ENCODE measurements at regions of chr16 and their contacts with region 1.

Region 1: DNA sequence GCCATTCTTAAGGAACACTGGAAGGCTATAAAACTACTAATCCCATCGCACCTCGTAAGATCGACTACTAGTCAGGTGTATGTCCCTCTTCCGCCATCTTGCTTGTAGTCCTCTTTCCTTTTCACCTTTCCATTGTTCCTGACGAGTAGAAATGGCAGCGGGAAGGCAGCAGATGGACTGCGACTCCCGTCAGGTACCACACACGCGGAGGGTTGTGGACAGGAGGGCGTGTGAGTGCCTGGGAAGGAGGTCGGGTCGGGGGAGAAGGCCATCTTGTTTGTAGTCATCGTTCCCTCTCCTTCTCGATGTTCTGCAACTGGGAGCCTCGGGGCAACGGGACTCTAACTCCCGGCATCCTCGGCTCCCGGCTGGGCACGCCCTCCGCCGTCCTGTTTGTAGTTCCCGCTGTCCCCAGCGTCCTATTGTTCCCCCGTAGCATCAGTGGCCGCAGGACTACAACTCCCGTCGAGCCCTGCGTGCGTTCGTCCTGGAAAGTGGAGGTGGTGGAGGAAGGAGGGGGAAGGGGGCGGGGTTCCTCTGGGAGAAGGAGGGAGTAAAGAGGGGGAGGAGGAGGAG is 324 bp upstream of the FBXL19 start:
- DNase-seq: peak; percentile 99
- ATAC-seq: peak; percentile 79
- H3K4me3 ChIP-seq: peak overlapping the region; percentile 59
- H3K27ac ChIP-seq: peak overlapping the region; percentile 94
- H3K4me1 ChIP-seq: peaks cover 2% of the 10 kb centered on the region; the same call in 1 of the 2 replicates
- H3K27me3 ChIP-seq: no peaks in the 10 kb centered on the region
- CTCF ChIP-seq: no peak
- POLR2A ChIP-seq: peak; percentile 78
- RAD21 ChIP-seq: no peak

Region 2: DNA sequence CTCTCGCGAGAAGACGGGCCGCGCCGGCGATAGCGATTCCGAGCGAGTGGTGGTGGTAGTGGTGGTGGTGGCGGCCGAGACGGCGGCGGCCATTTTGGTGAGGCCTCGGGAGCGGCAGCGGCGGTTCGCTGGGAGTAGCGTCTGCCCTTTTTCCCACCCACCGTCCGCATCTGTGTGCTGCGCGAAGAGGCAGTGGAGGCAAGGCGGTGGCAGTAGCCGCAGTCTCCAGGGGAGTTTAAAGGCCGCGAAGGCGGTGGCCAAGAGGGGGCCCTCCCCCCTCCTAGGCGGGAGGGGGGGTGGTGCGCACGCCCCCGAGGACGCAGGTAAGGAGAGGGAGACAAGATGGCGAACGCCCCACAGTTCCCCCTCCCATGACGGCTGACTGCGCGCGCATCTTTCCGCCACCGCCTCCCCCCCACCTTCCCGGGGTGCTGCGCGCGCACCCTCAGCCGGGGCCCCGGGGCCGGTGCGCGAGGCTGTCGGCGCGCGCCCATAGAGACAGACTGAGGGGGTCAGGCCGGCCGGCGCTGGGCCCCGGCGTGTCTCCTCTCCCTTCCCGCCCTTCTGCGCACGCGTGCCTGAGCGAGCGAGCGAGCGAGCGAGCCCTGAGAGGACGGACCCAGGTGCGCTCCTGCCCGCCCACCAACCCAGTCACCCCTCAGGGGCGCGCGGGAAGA is 224.8 kb before region 1 on chr16:
- CTCF ChIA-PET with region 1: no interaction called
- POLR2A ChIA-PET with region 1: no interaction called
- dilution Hi-C with region 1: no loop called
- in situ Hi-C with region 1: no loop called
- intact Hi-C with region 1: loop called (anchors 5 kb)
- DNase-seq: peak; percentile 87
- ATAC-seq: peak; percentile 83
- H3K4me3 ChIP-seq: peak overlapping the region; percentile 85
- H3K27ac ChIP-seq: peak overlapping the region; percentile 99
- H3K4me1 ChIP-seq: peaks cover 8% of the 10 kb centered on the region
- H3K27me3 ChIP-seq: no peaks in the 10 kb centered on the region
- CTCF ChIP-seq: no peak
- POLR2A ChIP-seq: peak; percentile 95
- RAD21 ChIP-seq: no peak

Region 3: DNA sequence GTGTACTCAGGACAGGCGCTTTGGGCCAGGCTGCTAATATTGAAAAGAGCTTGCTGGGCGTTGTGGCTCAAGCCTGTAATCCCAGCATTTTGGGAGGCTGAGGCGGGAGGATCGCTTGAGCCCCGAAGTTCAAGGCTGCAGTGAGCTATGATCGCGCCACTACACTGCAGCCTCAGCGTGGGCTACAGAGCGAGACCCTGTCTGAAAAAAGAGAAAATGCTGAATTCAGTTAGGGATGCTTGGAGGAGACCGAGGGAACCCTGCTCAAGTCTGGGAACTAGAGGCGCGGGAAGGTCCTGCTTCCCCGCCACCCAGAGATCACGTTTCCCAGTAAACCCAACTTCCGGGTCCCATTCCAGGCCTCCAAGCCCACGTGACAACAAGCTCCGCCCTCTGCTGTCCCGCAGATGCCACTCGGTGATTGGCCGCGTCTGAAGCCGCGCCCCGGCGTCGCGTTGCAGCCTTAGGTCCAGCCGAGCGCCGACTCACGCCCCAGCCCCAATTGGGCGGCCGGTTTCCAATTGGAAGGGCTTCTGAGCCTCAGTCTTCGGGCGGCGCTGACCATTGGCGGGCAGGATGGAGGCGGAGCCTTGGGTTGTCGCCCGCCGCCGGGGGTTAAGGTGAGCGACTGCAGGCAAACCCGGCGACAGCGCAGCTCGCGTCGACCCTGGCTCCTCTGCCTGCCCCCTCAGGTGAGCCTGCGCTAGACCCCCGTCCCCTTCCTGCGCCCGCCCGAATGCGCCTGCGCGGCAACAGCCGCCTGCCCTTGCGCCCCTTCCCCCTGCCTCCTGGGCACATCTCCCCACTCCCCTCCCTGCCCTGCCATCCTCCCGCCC is 175.0 kb before region 1 on chr16 and contains the start of gene PHKG2:
- CTCF ChIA-PET with region 1: no interaction called
- POLR2A ChIA-PET with region 1: no interaction called
- dilution Hi-C with region 1: no loop called
- in situ Hi-C with region 1: no loop called
- intact Hi-C with region 1: loop called (anchors 1 kb)
- DNase-seq: peak; percentile 98
- ATAC-seq: peak; percentile 99
- H3K4me3 ChIP-seq: peak within 1 kb of the TSS; percentile 81
- H3K27ac ChIP-seq: peak within 1 kb of the TSS; percentile 89
- H3K4me1 ChIP-seq: no peaks in the 10 kb centered on the region
- H3K27me3 ChIP-seq: no peaks in the 10 kb centered on the region
- CTCF ChIP-seq: no peak
- POLR2A ChIP-seq: peak; percentile 66
- RAD21 ChIP-seq: no peak
- total RNA-seq, gene PHKG2: 26.0 and 26.7 TPM in 2 replicates

Region 4: DNA sequence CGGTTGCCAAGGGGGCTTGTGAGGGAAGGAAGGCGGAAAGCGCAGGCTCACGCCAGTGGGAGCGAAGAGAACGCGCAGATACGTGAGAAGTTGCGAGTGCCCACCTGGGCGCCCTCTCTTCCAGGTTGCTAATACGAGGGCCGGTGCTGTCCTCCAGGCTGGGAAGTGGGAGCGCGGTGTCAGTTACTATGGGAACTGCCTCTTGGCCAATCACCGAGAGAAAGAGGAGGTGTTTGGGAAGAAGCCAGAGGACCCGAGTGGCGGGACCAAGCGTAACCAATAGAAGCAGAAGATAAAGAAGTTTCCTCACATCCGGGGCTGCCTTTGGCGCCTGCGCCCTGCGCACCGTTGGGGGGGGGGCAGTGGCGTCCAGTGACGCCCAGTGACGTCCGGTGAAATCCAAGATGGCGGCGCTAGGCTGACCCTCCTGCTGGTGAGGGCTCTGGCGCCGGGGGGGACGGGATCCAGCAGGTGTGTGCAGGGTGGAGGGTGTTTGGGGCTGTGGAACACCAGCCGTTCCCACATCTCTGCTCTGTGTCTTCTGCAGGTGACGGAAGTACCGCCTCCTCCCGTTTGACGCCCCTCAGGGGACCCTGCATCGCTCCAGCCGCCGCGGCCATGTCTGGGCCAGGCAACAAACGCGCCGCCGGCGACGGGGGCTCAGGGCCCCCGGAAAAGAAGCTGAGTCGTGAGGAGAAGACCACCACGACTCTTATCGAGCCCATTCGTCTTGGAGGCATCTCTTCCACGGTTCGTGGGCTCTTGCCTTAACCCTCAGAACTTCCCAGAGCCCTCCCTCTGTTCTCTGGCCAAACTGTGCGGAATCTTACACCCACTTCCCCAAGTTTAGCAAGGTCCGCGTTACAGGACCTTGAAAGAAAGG is 160.9 kb before region 1 on chr16 and contains the starts of genes CFAP119 and RNF40:
- CTCF ChIA-PET with region 1: no interaction called
- POLR2A ChIA-PET with region 1: no interaction called
- dilution Hi-C with region 1: no loop called
- in situ Hi-C with region 1: no loop called
- intact Hi-C with region 1: loop called (anchors 5 kb)
- DNase-seq: peak; percentile 97
- ATAC-seq: peak; percentile 96
- H3K4me3 ChIP-seq: peak within 1 kb of the TSS; percentile 86
- H3K27ac ChIP-seq: peak within 1 kb of the TSS; percentile 89
- H3K4me1 ChIP-seq: peaks cover 12% of the 10 kb centered on the region
- H3K27me3 ChIP-seq: no peaks in the 10 kb centered on the region
- CTCF ChIP-seq: no peak
- POLR2A ChIP-seq: peak; percentile 88
- RAD21 ChIP-seq: no peak
- total RNA-seq, gene CFAP119: 0.90 and 1.7 TPM in 2 replicates
- total RNA-seq, gene RNF40: 63.9 and 72.4 TPM in 2 replicates

Region 5: DNA sequence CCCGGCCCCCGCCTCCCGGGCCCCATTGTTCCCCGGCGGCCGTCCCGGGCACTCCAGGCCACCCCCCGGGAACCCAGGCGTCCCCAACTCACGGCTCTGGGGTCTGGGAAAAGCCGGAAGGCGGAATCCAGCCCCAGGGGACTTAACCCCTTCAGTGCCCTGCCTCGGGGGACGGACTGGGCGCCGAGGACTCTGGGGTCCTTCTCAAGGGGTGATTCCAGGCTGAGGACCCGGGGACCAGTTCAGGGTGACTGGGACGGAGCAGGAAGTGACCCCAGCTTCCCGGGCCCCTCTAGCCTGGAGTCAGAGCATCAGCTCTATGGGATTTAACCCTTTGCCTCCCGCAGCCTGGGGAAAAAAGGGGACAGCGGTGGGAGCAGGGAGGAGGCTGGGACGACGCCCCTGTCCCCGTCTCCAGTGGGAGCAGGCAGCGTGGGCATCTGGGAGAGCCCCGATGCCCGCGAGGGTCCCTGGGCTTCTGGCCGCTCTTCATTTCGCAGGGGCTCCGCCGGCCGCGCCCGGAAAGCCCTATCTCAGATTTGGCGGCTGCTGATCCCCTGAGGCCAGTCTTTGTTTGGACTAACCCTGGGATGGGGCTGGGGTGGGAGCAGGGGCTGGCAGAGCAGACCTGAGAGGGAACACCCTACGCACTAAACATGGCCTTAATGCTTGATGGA is 136.0 kb before region 1 on chr16 and contains the start of gene ZNF629:
- CTCF ChIA-PET with region 1: no interaction called
- POLR2A ChIA-PET with region 1: no interaction called
- dilution Hi-C with region 1: no loop called
- in situ Hi-C with region 1: no loop called
- intact Hi-C with region 1: loop called (anchors 1 kb)
- DNase-seq: peak; percentile 57
- ATAC-seq: peak; percentile 88
- H3K4me3 ChIP-seq: peak within 1 kb of the TSS; percentile 96
- H3K27ac ChIP-seq: peak within 1 kb of the TSS; percentile 96
- H3K4me1 ChIP-seq: peaks cover 4% of the 10 kb centered on the region
- H3K27me3 ChIP-seq: 0 out of 2 replicates have a peak, but pooled peaks cover 2% of the 10 kb centered on the region
- CTCF ChIP-seq: no peak
- POLR2A ChIP-seq: 0 out of 2 replicates have a peak, but pooled peaks have one; percentile 22
- RAD21 ChIP-seq: 0 out of 2 replicates have a peak, but pooled peaks have one; percentile 3
- total RNA-seq, gene ZNF629: 9.1 and 9.4 TPM in 2 replicates

Region 6: DNA sequence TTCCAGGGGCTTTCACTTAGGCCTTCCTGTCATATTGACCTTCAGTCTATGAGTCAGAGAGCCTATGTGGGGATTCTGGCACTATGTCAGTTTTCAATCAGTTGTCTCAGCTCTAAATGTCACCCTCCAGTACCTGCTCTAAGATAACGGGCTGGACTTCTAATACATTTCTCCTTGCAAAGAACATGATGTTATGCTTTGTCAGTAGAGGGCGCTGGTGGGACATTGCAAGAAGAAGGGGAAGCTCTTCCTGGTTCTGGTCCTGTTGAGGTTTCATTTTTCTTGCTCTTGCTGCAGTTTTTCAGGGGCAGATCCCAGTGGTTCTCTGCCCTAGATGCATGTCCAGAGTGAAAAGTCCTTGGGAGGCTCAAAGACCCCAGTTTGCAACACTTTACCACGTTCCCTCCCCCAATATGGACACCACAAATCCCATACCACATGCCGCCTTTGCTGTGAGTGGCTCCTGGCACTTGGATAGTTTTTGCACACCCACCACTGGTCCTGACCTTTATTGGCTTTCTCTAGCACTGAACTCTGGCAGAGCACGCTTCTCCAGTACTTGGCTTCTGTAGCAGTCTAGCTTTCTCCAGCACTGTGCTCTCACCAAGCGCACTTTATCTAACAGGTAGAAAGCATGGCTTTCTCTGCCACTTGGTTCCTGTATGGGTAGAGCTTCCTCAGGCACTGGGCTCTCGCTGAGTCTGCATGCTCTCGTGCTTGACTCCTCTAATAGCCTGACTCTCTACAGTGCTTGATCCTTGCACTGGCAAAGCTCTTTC is 78.2 kb before region 1 on chr16:
- CTCF ChIA-PET with region 1: interaction called, 6 read pairs
- POLR2A ChIA-PET with region 1: no interaction called
- dilution Hi-C with region 1: no loop called
- in situ Hi-C with region 1: no loop called
- intact Hi-C with region 1: loop called (anchors 1 kb)
- DNase-seq: peak; percentile 90
- ATAC-seq: peak; percentile 92
- H3K4me3 ChIP-seq: no peak overlapping the region
- H3K27ac ChIP-seq: no peak overlapping the region
- H3K4me1 ChIP-seq: peaks cover 5% of the 10 kb centered on the region; the same call in 1 of the 2 replicates
- H3K27me3 ChIP-seq: no peaks in the 10 kb centered on the region
- CTCF ChIP-seq: peak; percentile 94
- POLR2A ChIP-seq: no peak
- RAD21 ChIP-seq: peak; percentile 91